Panc1 (cell line): ENCODE measurements at regions of chr9 and their contacts with region 1.

Region 1: DNA sequence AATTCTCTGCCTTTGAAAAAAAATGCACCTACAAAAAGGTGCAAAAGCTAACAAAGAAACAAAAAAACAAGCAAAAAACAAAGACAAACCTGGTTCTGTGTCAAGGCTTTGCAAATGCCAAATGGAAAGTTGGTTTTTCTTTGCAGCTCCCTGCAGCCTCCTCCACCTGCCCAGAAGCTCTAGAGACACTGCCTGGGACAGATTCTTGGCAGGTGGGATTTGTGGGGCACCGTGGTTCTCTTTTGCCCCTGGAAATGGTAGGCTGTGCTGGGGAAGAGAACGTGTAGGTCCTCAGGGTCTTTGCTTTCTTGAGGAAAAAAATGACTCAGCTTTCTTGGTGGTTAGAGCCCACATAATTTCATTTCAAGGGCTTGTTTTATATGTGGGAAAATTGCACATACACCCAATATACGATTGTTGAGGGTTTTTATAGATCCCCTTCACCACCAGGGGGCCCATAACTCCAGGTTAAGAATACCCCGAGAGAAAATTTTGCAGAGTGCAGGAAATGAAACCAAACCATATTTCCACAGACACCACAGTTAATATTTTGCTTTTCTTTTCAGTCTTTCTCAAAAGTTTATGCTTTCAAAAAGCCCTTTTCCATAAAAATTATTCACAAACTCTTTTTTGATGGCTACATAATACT is 58.7 kb downstream of the NXNL2 start:
- DNase-seq: peak; percentile 2
- ATAC-seq: no peak
- H3K4me3 ChIP-seq: no peak overlapping the region
- H3K27ac ChIP-seq: no peak overlapping the region
- H3K4me1 ChIP-seq: no peaks in the 10 kb centered on the region
- H3K27me3 ChIP-seq: no peaks in the 10 kb centered on the region
- CTCF ChIP-seq: peak; percentile 61; the same call in 1 of the 2 replicates

Region 2: DNA sequence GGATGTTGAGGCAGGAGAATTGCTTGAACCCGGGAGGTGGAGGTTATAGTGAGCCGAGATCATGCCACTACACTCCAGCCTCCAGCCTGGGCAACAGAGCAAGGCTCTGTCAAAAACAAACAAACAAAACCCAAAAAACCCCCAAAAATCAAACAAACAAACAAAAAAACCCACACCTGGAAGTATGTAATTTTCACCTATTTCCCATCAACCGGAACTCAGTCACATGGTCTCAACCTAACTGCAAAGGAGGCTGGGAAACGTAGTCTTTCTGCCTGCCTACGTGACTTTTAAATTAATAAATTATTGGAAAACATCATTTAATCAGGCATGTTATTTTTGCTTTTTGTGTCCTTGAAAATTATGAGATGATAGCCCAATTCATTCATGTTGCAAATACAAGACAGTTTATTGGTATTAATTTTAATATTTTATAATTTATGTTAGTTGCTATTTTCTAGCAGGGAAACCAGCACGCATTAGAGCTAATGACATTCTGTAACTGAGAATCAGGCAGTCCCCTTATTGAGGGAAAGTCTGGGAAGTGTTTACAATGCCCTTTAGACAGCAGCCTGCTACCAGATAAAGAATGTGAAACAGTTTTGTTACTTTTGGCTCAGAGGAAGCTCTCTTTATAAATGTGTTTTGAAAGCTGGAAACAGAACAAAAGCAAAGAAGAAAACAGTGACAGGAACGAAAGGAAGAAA is 51.7 kb after region 1 on chr9:
- CTCF ChIA-PET with region 1: no interaction called
- POLR2A ChIA-PET with region 1: no interaction called
- in situ Hi-C with region 1: no loop called
- intact Hi-C with region 1: no loop called
- DNase-seq: no peak
- ATAC-seq: no peak
- H3K4me3 ChIP-seq: no peak overlapping the region
- H3K27ac ChIP-seq: no peak overlapping the region
- H3K4me1 ChIP-seq: no peaks in the 10 kb centered on the region
- H3K27me3 ChIP-seq: no peaks in the 10 kb centered on the region
- CTCF ChIP-seq: no peak

Region 3: GRCh38 chr9:88733651-88734421 is 140.2 kb after region 1 on chr9:
- CTCF ChIA-PET with region 1: no interaction called
- POLR2A ChIA-PET with region 1: no interaction called
- in situ Hi-C with region 1: no loop called
- intact Hi-C with region 1: loop called (anchors 10 kb)
- DNase-seq: no peak
- ATAC-seq: no peak
- H3K4me3 ChIP-seq: no peak overlapping the region
- H3K27ac ChIP-seq: no peak overlapping the region
- H3K4me1 ChIP-seq: no peaks in the 10 kb centered on the region
- H3K27me3 ChIP-seq: no peaks in the 10 kb centered on the region
- CTCF ChIP-seq: no peak

Region 4: GRCh38 chr9:88818495-88819201 is 225.0 kb after region 1 on chr9:
- CTCF ChIA-PET with region 1: no interaction called
- POLR2A ChIA-PET with region 1: no interaction called
- in situ Hi-C with region 1: no loop called
- intact Hi-C with region 1: no loop called
- DNase-seq: no peak
- ATAC-seq: no peak
- H3K4me3 ChIP-seq: no peak overlapping the region
- H3K27ac ChIP-seq: no peak overlapping the region
- H3K4me1 ChIP-seq: no peaks in the 10 kb centered on the region
- H3K27me3 ChIP-seq: no peaks in the 10 kb centered on the region
- CTCF ChIP-seq: no peak

Region 5: DNA sequence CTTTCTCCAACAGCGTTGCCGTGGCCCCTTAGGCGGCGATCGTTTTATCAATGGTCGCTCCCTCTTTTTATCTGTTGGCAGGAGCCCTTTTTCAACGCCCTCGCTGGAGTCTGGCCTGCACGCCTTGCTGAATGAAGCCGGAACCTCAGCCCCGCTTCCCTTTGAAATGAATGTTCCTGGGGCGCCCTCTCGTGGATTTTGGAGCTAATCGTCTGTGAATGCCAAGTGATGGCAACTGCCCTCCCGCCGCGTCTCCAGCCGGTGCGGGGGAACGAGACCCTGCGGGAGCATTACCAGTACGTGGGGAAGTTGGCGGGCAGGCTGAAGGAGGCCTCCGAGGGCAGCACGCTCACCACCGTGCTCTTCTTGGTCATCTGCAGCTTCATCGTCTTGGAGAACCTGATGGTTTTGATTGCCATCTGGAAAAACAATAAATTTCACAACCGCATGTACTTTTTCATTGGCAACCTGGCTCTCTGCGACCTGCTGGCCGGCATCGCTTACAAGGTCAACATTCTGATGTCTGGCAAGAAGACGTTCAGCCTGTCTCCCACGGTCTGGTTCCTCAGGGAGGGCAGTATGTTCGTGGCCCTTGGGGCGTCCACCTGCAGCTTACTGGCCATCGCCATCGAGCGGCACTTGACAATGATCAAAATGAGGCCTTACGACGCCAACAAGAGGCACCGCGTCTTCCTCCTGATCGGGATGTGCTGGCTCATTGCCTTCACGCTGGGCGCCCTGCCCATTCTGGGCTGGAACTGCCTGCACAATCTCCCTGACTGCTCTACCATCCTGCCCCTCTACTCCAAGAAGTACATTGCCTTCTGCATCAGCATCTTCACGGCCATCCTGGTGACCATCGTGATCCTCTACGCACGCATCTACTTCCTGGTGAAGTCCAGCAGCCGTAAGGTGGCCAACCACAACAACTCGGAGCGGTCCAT is 407.6 kb after region 1 on chr9:
- CTCF ChIA-PET with region 1: no interaction called
- POLR2A ChIA-PET with region 1: no interaction called
- in situ Hi-C with region 1: no loop called
- intact Hi-C with region 1: loop called (anchors 2 kb)
- DNase-seq: no peak
- ATAC-seq: peak; percentile 93
- H3K4me3 ChIP-seq: no peak overlapping the region
- H3K27ac ChIP-seq: no peak overlapping the region
- H3K4me1 ChIP-seq: no peaks in the 10 kb centered on the region
- H3K27me3 ChIP-seq: no peaks in the 10 kb centered on the region
- CTCF ChIP-seq: peak; percentile 80